Activated T-helper 2 cell treated with anti-CD3 and anti-CD28 coated beads, Interferon-gamma antibody, Interleukin-2, Interleukin-4, amounts not matched to agents 10 μg/mL and 5 μg/mL and 100 μg/mL, durations not matched to agents 14 hours and 24 hours and 36 hours (primary cell): ENCODE measurements at regions of chr19 and their contacts with region 1.

Region 1: DNA sequence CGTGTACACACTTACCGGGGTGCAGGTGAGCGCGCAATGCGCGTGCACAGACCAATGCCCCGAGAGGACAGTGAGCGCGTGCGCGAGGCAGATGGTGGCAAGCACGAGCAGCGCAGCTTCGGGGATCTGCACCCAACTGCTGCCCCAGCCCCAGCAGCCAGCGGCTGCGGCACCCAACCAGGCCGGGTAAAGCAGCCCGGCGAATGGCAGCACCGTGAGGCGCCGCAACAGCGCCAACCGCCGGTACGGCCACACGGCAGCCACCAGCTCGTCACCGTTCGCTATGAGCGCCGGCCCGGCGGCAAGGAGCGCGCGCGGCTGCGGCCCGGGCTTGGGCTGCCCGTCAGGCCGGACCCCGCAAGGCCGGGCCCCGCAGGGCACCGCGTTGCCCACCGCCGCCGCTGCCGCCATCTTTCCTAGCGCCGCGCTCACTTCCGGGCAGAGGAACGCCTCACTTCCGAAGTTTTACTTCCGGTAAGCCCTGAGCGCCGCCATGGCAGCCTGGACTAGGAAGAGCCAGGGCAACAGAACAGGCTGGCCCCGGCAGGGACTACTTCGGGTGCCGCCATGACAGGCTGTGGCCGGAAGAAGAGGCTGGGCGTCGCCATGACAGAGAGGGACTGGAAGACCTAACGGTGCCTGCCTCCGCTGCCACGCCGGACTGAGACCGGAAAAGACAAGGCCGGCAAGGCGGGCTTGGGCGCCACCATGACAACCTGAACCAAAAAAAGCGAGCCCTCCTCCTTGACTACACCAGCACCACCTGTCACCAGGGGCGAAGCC is at the start of gene ATP13A1:
- DNase-seq: peak; percentile 93
- H3K4me3 Mint-ChIP-seq: peak within 1 kb of the TSS; percentile 89
- H3K27ac Mint-ChIP-seq: peak within 1 kb of the TSS; percentile 98
- H3K4me1 Mint-ChIP-seq: peaks cover 24% of the 10 kb centered on the region
- H3K27me3 Mint-ChIP-seq: no peaks in the 10 kb centered on the region
- total RNA-seq, gene ATP13A1: 71.6 and 74.8 TPM in 2 replicates

Region 2: DNA sequence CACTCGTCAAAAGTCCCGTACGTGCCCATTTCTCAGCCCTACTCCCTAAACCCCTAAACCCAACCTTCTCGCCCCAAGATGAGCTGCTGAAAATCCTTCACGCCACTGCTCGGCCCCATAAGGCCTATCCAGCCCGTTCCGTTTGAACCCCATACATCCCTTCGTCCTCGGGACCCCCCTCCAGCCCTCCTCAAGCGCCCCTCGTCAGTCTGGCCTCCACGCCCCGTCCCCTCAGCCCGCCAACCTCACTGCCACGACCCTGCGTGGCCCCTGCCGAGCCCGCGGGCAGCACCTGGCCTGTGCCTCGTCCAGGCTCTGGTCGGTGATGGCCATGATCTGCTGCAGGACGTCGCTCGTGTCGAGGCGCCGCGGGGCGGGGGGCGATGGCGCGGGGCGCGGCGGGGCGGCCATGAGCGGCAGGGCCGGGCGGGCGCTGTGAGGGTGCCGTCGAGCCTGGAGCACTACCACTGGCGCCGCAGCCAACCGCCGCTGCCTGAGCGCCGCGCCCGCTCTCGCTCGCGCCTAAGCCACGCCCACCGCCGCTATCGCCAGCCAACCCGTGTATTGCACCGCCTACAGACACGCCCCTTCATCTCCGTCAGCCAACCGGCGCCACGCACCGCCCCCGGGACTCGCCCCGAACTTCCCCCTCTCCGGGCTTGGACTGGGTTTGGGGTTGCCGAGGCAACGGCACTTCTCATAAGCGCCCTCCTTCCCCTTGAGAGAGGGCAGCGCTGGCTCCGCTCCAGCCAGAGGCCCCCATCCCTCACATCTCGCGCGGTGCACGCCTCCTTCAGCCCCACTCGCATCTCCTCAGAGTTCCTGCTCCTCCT is 45.0 kb before region 1 on chr19 and contains the start of gene PBX4:
- intact Hi-C with region 1: loop called (anchors 1 kb)
- DNase-seq: peak; percentile 99
- H3K4me3 Mint-ChIP-seq: peak within 1 kb of the TSS; percentile 91
- H3K27ac Mint-ChIP-seq: peak within 1 kb of the TSS; percentile 87
- H3K4me1 Mint-ChIP-seq: peaks cover 33% of the 10 kb centered on the region
- H3K27me3 Mint-ChIP-seq: no peaks in the 10 kb centered on the region
- total RNA-seq, gene PBX4: 23.4 and 24.8 TPM in 2 replicates

Region 3: GRCh38 chr19:19732579-19733501 is 69.4 kb after region 1 on chr19 and contains the start of gene ZNF14:
- intact Hi-C with region 1: loop called (anchors 2 kb)
- DNase-seq: peak; percentile 84
- H3K4me3 Mint-ChIP-seq: peak within 1 kb of the TSS; percentile 97
- H3K27ac Mint-ChIP-seq: peak within 1 kb of the TSS; percentile 91
- H3K4me1 Mint-ChIP-seq: peaks cover 11% of the 10 kb centered on the region
- H3K27me3 Mint-ChIP-seq: no peaks in the 10 kb centered on the region
- total RNA-seq, gene ZNF14: 4.2 and 4.6 TPM in 2 replicates

Region 4: DNA sequence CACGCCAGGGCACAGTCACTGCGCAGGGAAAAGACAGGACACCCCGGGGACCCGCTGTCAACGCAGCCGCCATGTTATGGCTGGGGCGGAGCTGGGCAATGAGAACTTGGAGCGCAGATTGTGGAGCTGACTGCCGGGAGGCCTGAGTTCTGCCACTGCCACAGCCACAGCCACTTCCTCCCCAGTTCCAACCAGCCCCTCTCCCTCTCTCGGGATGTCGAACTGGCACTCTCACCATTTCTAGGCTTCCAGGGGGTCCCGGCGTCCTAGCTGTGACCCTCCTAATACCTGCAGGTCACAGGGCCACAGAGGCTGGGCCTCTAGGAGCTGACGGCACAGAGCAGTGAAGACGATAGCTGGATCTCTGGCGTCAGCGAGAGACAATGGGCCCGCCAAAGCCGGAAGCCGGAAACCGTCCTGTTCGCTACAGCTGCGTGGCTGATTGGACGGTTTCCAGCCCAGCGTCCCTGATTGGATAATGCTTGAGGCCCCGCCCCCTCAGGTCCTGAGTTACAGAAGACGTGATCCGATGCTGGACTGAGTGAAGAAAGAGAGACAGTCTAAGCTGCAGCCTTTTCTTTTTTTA is 158.0 kb after region 1 on chr19 and contains the start of gene ZNF506:
- intact Hi-C with region 1: loop called (anchors 1 kb)
- DNase-seq: peak; percentile 90
- H3K4me3 Mint-ChIP-seq: peak within 1 kb of the TSS; percentile 96
- H3K27ac Mint-ChIP-seq: peak within 1 kb of the TSS; percentile 98
- H3K4me1 Mint-ChIP-seq: peaks cover 13% of the 10 kb centered on the region
- H3K27me3 Mint-ChIP-seq: no peaks in the 10 kb centered on the region
- total RNA-seq, gene ZNF506: 13.2 and 15.1 TPM in 2 replicates